Activated naive CD4-positive, alpha-beta T cell treated with anti-CD3 and anti-CD28 coated beads, Interleukin-2, amount 10 ng/mL, durations not matched to agents 7 days and 5 days (primary cell): ENCODE measurements at regions of chr5 and their contacts with region 1.

Region 1: DNA sequence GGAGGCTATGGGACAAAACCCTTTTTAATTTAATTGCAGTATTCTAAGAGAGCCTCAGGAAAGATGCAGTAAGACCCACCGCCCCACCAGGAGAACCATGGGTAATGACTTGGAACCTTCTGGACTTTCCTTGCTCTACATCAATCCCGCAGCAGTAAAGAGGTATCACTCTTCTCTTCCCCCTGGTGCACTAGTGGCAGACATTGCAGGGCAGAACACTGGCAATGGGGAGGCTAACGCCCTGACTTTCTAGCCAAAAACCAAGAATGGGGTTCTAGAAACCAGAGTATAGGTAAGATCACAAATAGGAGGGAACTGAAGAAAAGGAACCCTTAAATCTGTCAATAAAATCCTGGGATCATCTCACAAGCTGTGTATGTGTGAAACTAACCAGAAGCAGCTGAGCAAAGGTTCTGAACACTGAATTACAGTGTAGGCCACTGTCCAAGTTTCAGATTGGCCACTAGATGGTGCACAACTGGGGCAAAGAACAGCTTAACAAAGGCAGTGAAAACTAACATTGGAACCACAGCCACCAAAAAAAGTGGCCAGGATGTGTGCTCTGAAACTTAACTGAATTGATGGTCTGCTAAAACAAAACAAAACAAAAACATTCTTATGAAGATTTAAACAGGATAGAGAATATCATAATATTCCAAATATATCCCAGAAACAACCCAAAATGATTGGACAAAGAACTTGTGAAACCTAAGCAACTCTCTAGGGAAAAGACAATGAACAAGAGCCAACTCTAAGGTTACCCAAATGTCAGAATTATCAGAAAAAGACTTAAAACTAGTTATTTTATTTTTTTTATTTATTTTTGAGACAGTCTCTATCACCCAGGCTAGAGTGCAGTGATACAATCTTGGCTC is 6.6 kb upstream of the FAM151B start:
- DNase-seq: peak; percentile 67
- H3K4me3 Mint-ChIP-seq: no peak overlapping the region
- H3K27ac Mint-ChIP-seq: no peak overlapping the region
- H3K4me1 Mint-ChIP-seq: peaks cover 10% of the 10 kb centered on the region
- H3K27me3 Mint-ChIP-seq: no peaks in the 10 kb centered on the region

Region 2: DNA sequence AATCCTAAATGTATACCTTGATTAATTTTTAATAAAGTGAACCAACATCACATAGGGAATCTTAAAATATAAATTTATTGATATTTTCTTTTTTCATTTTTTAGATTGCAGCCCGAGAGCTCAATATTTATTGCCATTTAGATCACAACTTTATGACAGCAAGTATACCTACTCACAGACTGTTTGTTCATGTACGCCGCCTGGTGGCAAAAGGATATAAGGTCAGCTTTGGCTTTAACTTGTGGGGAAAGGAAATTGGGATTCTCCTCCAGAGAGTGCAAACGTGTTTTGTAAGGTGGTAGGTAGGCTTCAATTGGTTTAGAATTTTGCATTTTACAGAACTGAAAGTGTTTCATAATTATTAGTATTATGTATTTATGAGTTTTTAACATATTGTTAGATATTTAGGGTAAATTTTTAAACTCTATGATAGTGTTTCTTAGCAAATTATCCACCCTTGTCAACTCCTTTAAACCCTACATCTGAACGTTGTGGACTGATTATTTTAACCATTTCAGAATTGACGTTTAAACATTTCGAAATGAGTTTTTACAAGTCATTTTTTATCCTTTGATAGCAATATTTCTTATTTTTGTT is 191.0 kb after region 1 on chr5:
- CTCF ChIA-PET with region 1: interaction called, 26 read pairs
- DNase-seq: peak; percentile 82
- H3K4me3 Mint-ChIP-seq: no peak overlapping the region
- H3K27ac Mint-ChIP-seq: no peak overlapping the region
- H3K4me1 Mint-ChIP-seq: peaks cover 4% of the 10 kb centered on the region
- H3K27me3 Mint-ChIP-seq: no peaks in the 10 kb centered on the region

Region 3: GRCh38 chr5:80703747-80704146 is 222.5 kb after region 1 on chr5:
- CTCF ChIA-PET with region 1: no interaction called
- DNase-seq: no peak
- H3K4me3 Mint-ChIP-seq: no peak overlapping the region
- H3K27ac Mint-ChIP-seq: no peak overlapping the region
- H3K4me1 Mint-ChIP-seq: peaks cover 27% of the 10 kb centered on the region
- H3K27me3 Mint-ChIP-seq: no peaks in the 10 kb centered on the region